Heart left ventricle (tissue), 16 donors: ENCODE measurements at regions of chr20 and their contacts with region 1.

Region 1: GRCh38 chr20:45752746-45753145 is 30.6 kb downstream of the SPINT4 start:
- DNase-seq: no peak
- ATAC-seq: no peak
- H3K4me3 ChIP-seq: no peak overlapping the region
- H3K27ac ChIP-seq: no peak overlapping the region
- H3K4me1 ChIP-seq: no peaks in the 10 kb centered on the region
- H3K27me3 ChIP-seq: peaks cover 0 to 8% (median 0%) of the 10 kb centered on the region in 9 donors
- CTCF ChIP-seq: no peak
- POLR2A ChIP-seq: no peak

Region 2: GRCh38 chr20:45470262-45470931 is 282.3 kb before region 1 on chr20:
- intact Hi-C with region 1: loop called in 2 of 10 experiments (anchors 10 kb)
- DNase-seq: peak in 4 of 5 donors; percentile 31 to 67 (median 40)
- ATAC-seq: peak in 3 of 4 donors; percentile 71 to 88 (median 77)
- H3K4me3 ChIP-seq: peak overlapping the region; percentile 41 to 64 (median 53)
- H3K27ac ChIP-seq: peak overlapping the region in 2 of 12 donors; percentile 29 to 85
- H3K4me1 ChIP-seq: peaks cover 6 to 23% (median 16%) of the 10 kb centered on the region in 12 donors
- H3K27me3 ChIP-seq: peaks cover 7 to 77% (median 33%) of the 10 kb centered on the region in 9 donors
- CTCF ChIP-seq: no peak
- POLR2A ChIP-seq: no peak

Region 3: DNA sequence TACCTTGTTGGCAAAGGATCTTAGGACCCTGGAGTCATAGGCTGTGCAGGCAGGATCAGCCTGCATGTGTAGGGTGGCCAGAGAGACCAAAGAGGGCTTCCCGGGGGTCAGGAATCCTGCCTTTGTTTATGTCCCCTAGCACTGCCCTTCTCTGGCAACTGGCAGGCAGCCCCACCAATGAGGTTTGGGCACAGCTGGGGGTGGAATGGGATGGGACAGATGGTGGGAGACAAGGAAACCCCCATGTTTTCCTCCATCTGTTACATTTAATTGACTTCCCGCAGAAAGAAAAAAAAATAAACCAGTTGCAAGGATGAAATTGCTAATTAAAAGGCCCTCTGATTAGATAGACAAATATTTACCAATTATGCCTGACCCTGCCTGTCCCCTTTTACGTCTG is 393.0 kb after region 1 on chr20:
- intact Hi-C with region 1: no loop called
- DNase-seq: no peak
- ATAC-seq: no peak
- H3K4me3 ChIP-seq: no peak overlapping the region
- H3K27ac ChIP-seq: no peak overlapping the region
- H3K4me1 ChIP-seq: no peaks in the 10 kb centered on the region
- H3K27me3 ChIP-seq: peaks cover 0 to 33% (median 8%) of the 10 kb centered on the region in 9 donors
- CTCF ChIP-seq: no peak
- POLR2A ChIP-seq: no peak